ENCODE measurements at regions of chr4 and their contacts with region 1.

Region 1: DNA sequence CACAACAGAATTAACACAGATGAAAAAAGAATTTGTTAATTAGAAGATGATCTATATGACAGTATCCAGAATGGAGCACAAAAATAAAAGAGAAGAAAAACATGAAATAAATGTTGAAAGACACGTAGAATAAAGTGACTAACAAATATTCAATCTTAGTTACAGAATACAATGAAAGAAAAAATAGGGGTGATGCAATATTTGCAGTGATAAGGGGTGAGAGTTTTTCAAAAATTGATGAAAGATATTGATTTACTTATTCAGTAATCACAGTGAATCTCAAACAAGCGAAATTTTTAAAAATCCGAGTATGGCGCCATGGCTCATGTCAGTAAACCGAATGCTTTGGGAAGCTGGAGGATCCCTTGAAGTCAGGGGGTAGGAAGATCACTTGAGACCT is 20.2 kb upstream of the RAB28 start:
- DNase-seq: no peak
- ATAC-seq: no peak
- H3K4me3 ChIP-seq: no peak overlapping the region
- H3K4me3 Mint-ChIP-seq: no peak overlapping the region
- H3K27ac ChIP-seq: no peak overlapping the region
- H3K27ac Mint-ChIP-seq: no peak overlapping the region
- H3K4me1 ChIP-seq: no peaks in the 10 kb centered on the region
- H3K4me1 Mint-ChIP-seq: no peaks in the 10 kb centered on the region
- H3K27me3 ChIP-seq: peaks cover 4 to 15% of the 10 kb centered on the region in 2 experiments
- H3K27me3 Mint-ChIP-seq: peaks cover 31% of the 10 kb centered on the region
- CTCF ChIP-seq: no peak

Region 2: GRCh38 chr4:13445841-13446790 is 58.3 kb before region 1 on chr4:
- CTCF ChIA-PET with region 1: no interaction called
- POLR2A ChIA-PET with region 1: no interaction called
- intact Hi-C with region 1: loop called in 1 of 2 experiments (anchors 2 kb)
- DNase-seq: no peak
- ATAC-seq: no peak
- H3K4me3 ChIP-seq: no peak overlapping the region
- H3K4me3 Mint-ChIP-seq: no peak overlapping the region
- H3K27ac ChIP-seq: no peak overlapping the region
- H3K27ac Mint-ChIP-seq: no peak overlapping the region
- H3K4me1 ChIP-seq: no peaks in the 10 kb centered on the region
- H3K4me1 Mint-ChIP-seq: peaks cover 4% of the 10 kb centered on the region
- H3K27me3 ChIP-seq: no peaks in the 10 kb centered on the region
- H3K27me3 Mint-ChIP-seq: no peaks in the 10 kb centered on the region
- CTCF ChIP-seq: no peak

Measured in CD4-positive, alpha-beta T cell (primary cell).